GM12878 (cell line): ENCODE measurements at regions of chr2 and their contacts with region 1.

Region 1: GRCh38 chr2:136378712-136379595 is 261.0 kb upstream of the CXCR4 start:
- DNase-seq: no peak
- ATAC-seq: peak; percentile 55
- H3K4me3 ChIP-seq: no peak overlapping the region
- H3K27ac ChIP-seq: no peak overlapping the region
- H3K4me1 ChIP-seq: peaks cover 51% of the 10 kb centered on the region
- H3K27me3 ChIP-seq: no peaks in the 10 kb centered on the region
- CTCF ChIP-seq: peak; percentile 85 to 92 (median 86)
- EP300 ChIP-seq: no peak
- POLR2A ChIP-seq: no peak
- RAD21 ChIP-seq: peak; percentile 96

Region 2: DNA sequence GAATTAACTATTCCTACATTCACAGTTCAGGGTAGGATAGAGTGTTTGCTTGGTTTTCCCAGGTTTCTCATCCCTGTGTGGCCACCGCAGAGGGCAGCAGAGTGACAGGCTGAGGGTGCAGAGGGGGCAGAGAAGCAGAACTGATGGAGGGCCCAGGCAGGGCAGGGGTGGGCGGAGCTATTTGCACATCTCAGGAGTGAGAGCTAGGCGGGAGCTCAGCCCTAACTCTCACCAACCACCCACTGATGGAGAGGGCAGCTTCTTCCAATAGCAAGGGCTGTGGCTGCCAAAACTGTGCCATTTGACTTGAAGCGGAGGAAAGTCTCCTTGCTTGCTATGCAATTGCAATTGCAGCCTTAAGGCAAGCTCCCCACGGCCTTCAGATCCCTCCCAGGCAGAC is 381.6 kb before region 1 on chr2:
- CTCF ChIA-PET with region 1: interaction called, 39 read pairs
- POLR2A ChIA-PET with region 1: no interaction called
- RAD21 ChIA-PET with region 1: interaction called, 14 read pairs
- SMC1A ChIA-PET with region 1: interaction called, 25 read pairs
- in situ Hi-C with region 1: no loop called
- intact Hi-C with region 1: no loop called
- DNase-seq: no peak
- ATAC-seq: peak; percentile 82
- H3K4me3 ChIP-seq: no peak overlapping the region
- H3K27ac ChIP-seq: no peak overlapping the region
- H3K4me1 ChIP-seq: peaks cover 11% of the 10 kb centered on the region
- H3K27me3 ChIP-seq: no peaks in the 10 kb centered on the region
- CTCF ChIP-seq: peak; percentile 5 to 27 (median 7); a peak in 3 of 6 replicates
- EP300 ChIP-seq: no peak
- POLR2A ChIP-seq: no peak
- RAD21 ChIP-seq: peak; percentile 61

Region 3: DNA sequence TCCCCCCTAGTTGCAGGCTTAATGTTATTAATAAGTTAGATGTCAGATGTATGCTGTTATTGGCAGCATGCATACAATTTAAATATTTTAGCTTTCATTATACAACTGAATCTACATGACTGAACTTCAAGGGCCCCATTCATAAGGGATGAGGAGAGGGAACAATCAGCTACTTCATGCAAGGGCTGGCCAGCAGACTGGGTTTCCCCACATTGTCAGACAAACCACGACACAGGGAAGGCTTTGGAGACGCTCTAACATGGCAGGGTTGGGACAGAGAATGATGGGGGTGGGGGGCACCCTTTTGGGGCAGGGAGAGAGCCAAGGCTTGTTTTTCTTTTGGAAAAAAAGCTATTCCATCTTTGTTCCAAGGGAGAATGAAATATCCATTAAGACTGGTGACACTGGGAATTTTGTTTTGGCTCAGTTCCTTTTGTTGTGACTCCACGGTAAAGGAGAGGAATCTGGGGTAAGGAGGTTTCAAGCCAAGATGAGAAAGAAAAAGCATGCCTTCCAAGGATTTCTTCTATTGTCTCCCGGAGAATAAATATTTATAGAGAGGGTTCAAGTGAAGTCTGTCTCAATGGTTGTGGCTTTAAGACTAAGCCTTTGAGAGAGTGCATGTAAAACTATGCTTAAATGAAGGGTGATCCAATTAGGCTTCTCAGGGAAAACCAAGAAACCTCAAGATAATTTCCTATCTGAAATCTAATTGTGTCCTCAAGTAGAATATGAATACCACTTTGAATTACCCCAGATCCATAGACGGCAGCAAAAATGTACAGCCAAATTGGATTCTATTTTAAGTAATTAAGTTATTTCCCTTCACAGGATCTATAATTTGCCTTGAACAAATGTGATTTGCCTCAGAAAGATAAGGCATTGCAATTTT is 266.4 kb before region 1 on chr2:
- CTCF ChIA-PET with region 1: interaction called, 9 read pairs
- POLR2A ChIA-PET with region 1: no interaction called
- RAD21 ChIA-PET with region 1: interaction called, 9 read pairs
- SMC1A ChIA-PET with region 1: interaction called, 17 read pairs
- in situ Hi-C with region 1: no loop called
- intact Hi-C with region 1: loop called (anchors 2 kb)
- DNase-seq: no peak
- ATAC-seq: peak; percentile 3; the same call in 2 of the 3 replicates
- H3K4me3 ChIP-seq: no peak overlapping the region
- H3K27ac ChIP-seq: no peak overlapping the region
- H3K4me1 ChIP-seq: peaks cover 5% of the 10 kb centered on the region; the same call in 1 of the 2 replicates
- H3K27me3 ChIP-seq: 0 out of 4 replicates have a peak, but pooled peaks cover 0 to 3% of the 10 kb centered on the region in 2 experiments
- CTCF ChIP-seq: no peak
- EP300 ChIP-seq: no peak
- POLR2A ChIP-seq: no peak
- RAD21 ChIP-seq: no peak

Region 4: GRCh38 chr2:136207030-136207623 is 171.8 kb before region 1 on chr2:
- CTCF ChIA-PET with region 1: interaction called, 8 read pairs
- POLR2A ChIA-PET with region 1: interaction called, 4 read pairs
- RAD21 ChIA-PET with region 1: interaction called, 37 read pairs
- SMC1A ChIA-PET with region 1: interaction called, 32 read pairs
- in situ Hi-C with region 1: no loop called
- intact Hi-C with region 1: loop called (anchors 2 kb)
- DNase-seq: peak; percentile 68
- ATAC-seq: peak; percentile 79
- H3K4me3 ChIP-seq: no peak overlapping the region
- H3K27ac ChIP-seq: no peak overlapping the region
- H3K4me1 ChIP-seq: peaks cover 21% of the 10 kb centered on the region
- H3K27me3 ChIP-seq: no peaks in the 10 kb centered on the region; a peak in 1 of 4 replicates
- CTCF ChIP-seq: no peak
- EP300 ChIP-seq: peak; percentile 26 to 55; a peak in 2 of 4 replicates
- POLR2A ChIP-seq: no peak
- RAD21 ChIP-seq: 0 out of 2 replicates have a peak, but pooled peaks have one; percentile 0

Region 5: GRCh38 chr2:136246086-136246669 is 132.8 kb before region 1 on chr2:
- CTCF ChIA-PET with region 1: no interaction called
- POLR2A ChIA-PET with region 1: interaction called, 6 read pairs
- RAD21 ChIA-PET with region 1: interaction called, 26 read pairs
- SMC1A ChIA-PET with region 1: interaction called, 8 read pairs
- in situ Hi-C with region 1: no loop called
- intact Hi-C with region 1: no loop called
- DNase-seq: peak; percentile 60
- ATAC-seq: peak; percentile 96
- H3K4me3 ChIP-seq: no peak overlapping the region
- H3K27ac ChIP-seq: no peak overlapping the region; the same call in 1 of the 2 replicates
- H3K4me1 ChIP-seq: peaks cover 3% of the 10 kb centered on the region; the same call in 1 of the 2 replicates
- H3K27me3 ChIP-seq: 0 out of 4 replicates have a peak, but pooled peaks cover 0 to 2% of the 10 kb centered on the region in 2 experiments
- CTCF ChIP-seq: no peak
- EP300 ChIP-seq: peak; percentile 78 to 87; a peak in 3 of 4 replicates
- POLR2A ChIP-seq: no peak
- RAD21 ChIP-seq: no peak

Region 6: DNA sequence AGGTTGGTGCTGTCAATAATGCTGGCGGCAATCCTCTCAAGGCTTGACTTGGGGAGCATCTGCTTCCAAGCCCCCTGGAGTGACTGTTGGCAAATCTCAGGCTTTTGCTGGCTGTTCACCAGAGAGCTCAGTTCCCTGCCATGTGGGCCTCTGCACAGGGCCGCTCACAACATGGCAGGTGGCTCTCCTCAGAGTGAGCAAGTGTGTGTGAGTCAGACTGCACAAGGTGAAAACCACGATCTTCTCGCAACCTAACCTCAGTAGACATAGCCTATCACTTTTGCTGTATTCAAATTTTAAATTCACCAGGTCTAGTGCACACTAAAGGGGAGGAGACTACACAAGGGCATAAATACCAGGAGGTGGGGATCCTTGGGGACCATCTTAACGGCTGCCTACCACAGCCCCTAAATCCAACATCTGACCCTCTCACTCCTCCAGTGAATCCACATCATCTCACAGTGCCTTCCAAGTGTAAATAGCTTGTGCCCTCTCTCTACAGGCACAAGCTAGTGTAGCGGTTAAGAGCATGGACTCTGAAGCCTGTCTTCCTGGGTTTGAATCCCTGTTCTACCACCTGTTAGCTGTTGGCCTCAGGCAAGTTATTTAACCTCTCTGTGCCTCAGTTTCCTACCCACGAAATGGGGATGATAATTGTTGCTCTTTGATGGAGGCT is 73.3 kb before region 1 on chr2:
- CTCF ChIA-PET with region 1: interaction called, 13 read pairs
- POLR2A ChIA-PET with region 1: interaction called, 8 read pairs
- RAD21 ChIA-PET with region 1: interaction called, 25 read pairs
- SMC1A ChIA-PET with region 1: interaction called, 15 read pairs
- in situ Hi-C with region 1: no loop called
- intact Hi-C with region 1: loop called (anchors 5 kb)
- DNase-seq: no peak
- ATAC-seq: peak; percentile 93
- H3K4me3 ChIP-seq: no peak overlapping the region
- H3K27ac ChIP-seq: no peak overlapping the region
- H3K4me1 ChIP-seq: peaks cover 6% of the 10 kb centered on the region
- H3K27me3 ChIP-seq: peaks cover 0 to 5% of the 10 kb centered on the region in 2 experiments; a peak in 1 of 4 replicates
- CTCF ChIP-seq: no peak
- EP300 ChIP-seq: peak; percentile 62 to 64; a peak in 1 of 4 replicates
- POLR2A ChIP-seq: no peak
- RAD21 ChIP-seq: no peak

Region 7: DNA sequence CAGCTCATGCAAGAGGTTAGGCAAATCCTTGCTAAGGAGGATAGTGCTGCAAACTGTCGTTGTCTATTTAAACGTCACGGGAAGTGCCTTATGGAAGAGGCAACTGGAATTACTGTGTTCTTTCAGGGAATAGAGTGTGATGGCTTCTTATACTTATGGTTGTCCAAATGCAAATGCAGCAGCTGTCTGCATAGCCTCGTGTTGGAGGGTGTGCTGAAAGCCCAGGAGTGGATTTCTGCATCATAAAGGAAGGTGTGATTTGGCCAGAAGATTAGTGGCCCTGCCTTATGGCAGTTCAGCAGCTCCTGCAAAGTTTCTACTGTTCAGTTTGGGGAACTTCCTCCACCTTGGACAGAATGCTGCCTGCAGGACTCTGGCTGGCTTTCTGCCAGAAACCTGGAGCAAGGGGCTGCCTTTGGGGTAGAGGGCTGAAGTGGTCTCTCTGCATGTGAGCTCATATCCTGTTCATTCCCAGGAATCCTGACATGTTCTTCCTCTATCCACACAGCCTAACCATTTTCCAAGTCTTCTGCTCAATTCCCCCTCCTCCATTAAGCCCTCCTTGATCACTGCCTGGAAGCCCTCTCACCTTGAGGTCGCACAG is 60.2 kb after region 1 on chr2:
- CTCF ChIA-PET with region 1: no interaction called
- POLR2A ChIA-PET with region 1: no interaction called
- RAD21 ChIA-PET with region 1: no interaction called
- SMC1A ChIA-PET with region 1: no interaction called
- in situ Hi-C with region 1: no loop called
- intact Hi-C with region 1: no loop called
- DNase-seq: no peak
- ATAC-seq: no peak
- H3K4me3 ChIP-seq: no peak overlapping the region
- H3K27ac ChIP-seq: no peak overlapping the region
- H3K4me1 ChIP-seq: no peaks in the 10 kb centered on the region
- H3K27me3 ChIP-seq: peaks cover 0 to 1% of the 10 kb centered on the region in 2 experiments; a peak in 1 of 4 replicates
- CTCF ChIP-seq: no peak
- EP300 ChIP-seq: no peak
- POLR2A ChIP-seq: no peak
- RAD21 ChIP-seq: no peak

Region 8: DNA sequence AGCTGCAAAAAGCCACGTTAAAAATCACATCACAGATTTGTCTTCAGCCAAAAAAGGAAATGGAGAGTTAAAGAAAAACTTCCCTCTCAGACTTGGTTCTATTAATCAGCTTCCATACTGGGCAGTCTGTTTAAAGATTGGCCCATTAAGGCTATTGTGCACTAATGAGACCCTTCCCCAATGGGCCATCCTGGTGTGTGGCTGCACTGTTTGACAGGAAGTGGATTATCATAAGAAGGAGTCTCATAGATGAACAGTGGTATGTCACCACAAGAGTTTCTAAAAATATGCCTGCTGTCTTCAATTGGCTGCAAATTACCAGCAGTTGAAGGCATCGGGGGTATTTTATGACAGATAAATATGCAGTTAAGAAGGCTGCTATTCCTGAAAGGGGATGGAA is 138.8 kb after region 1 on chr2:
- CTCF ChIA-PET with region 1: no interaction called
- POLR2A ChIA-PET with region 1: no interaction called
- RAD21 ChIA-PET with region 1: no interaction called
- SMC1A ChIA-PET with region 1: no interaction called
- in situ Hi-C with region 1: no loop called
- intact Hi-C with region 1: no loop called
- DNase-seq: no peak
- ATAC-seq: no peak
- H3K4me3 ChIP-seq: no peak overlapping the region
- H3K27ac ChIP-seq: no peak overlapping the region
- H3K4me1 ChIP-seq: no peaks in the 10 kb centered on the region
- H3K27me3 ChIP-seq: peaks cover 2 to 4% of the 10 kb centered on the region in 2 experiments; a peak in 3 of 4 replicates
- CTCF ChIP-seq: no peak
- EP300 ChIP-seq: no peak
- POLR2A ChIP-seq: no peak
- RAD21 ChIP-seq: no peak